ENCODE measurements at regions of chr2 and their contacts with region 1.

Region 1: GRCh38 chr2:45643543-45644542 is 7.6 kb upstream of the PRKCE start:
- DNase-seq: peak; percentile 77 to 82 (median 78)
- ATAC-seq: peak; percentile 95 to 99 (median 98)
- H3K4me3 ChIP-seq: peak overlapping the region; percentile 61 to 67 (median 62)
- H3K27ac ChIP-seq: peak overlapping the region in 2 of 3 donors; percentile 39 to 54
- H3K4me1 ChIP-seq: peaks cover 0 to 10% (median 5%) of the 10 kb centered on the region in 4 donors
- H3K27me3 ChIP-seq: no peaks in the 10 kb centered on the region
- CTCF ChIP-seq: peak; percentile 86 to 99 (median 96)
- POLR2A ChIP-seq: no peak

Region 2: GRCh38 chr2:45778720-45779171 is 134.9 kb after region 1 on chr2:
- intact Hi-C with region 1: loop called (anchors 5 to 10 kb)
- DNase-seq: peak in 2 of 3 donors; percentile 40 to 76
- ATAC-seq: peak; percentile 90 to 95 (median 92)
- H3K4me3 ChIP-seq: peak overlapping the region in 2 of 3 donors; percentile 36 to 37
- H3K27ac ChIP-seq: peak overlapping the region in 1 of 3 donors; percentile 4
- H3K4me1 ChIP-seq: peaks cover 0 to 4% (median 0%) of the 10 kb centered on the region in 4 donors
- H3K27me3 ChIP-seq: no peaks in the 10 kb centered on the region
- CTCF ChIP-seq: peak; percentile 82 to 86 (median 86)
- POLR2A ChIP-seq: no peak

Region 3: DNA sequence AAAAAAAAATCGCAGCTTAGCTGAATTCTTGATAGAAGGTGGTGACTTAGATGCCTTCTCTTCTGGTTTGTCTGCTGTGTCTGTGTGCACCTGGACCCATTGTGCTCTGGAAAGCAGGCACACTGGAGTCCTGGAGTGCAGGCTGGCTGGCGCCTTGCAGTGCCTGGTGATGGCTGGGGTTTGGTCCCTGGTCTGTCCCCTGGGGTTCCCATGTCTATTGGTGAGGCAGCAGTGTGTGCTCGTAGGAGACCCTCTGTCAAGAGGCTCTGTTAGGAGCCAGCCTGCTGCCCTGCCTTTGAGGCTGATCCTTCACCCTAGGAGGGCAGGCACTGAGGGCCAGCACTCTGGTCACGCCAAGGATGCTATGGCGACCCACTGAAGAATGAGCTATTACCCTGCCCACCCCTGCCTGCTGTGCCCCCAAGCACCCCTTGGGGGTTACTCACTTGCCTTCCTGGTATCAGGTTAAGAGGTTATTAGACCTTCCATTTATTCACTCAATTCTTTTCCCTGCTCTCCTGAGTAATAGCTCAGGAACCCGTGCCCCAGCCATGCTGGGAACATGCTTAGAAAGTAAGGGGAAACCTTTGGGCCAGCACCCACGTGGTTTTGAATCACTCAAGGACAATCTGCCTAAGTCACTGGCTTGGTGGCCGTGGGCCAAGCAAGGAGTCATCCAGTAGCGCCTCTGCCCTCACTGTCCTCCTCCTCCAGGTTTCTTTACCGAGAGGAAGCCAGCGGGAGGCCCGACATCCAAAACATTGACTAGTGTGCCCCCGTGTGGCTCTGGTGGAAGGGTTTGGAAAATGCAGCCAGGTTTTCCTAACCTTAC is 292.2 kb after region 1 on chr2:
- intact Hi-C with region 1: loop called (anchors 5 kb)
- DNase-seq: peak; percentile 86 to 90 (median 86)
- ATAC-seq: peak; percentile 82 to 90 (median 87)
- H3K4me3 ChIP-seq: no peak overlapping the region
- H3K27ac ChIP-seq: no peak overlapping the region
- H3K4me1 ChIP-seq: peaks cover 0 to 20% (median 9%) of the 10 kb centered on the region in 4 donors
- H3K27me3 ChIP-seq: no peaks in the 10 kb centered on the region
- CTCF ChIP-seq: peak; percentile 71 to 86 (median 81)
- POLR2A ChIP-seq: no peak

Measured in right lobe of liver (tissue), 6 donors.